ENCODE measurements at regions of chr12 and their contacts with region 1.

Region 1: DNA sequence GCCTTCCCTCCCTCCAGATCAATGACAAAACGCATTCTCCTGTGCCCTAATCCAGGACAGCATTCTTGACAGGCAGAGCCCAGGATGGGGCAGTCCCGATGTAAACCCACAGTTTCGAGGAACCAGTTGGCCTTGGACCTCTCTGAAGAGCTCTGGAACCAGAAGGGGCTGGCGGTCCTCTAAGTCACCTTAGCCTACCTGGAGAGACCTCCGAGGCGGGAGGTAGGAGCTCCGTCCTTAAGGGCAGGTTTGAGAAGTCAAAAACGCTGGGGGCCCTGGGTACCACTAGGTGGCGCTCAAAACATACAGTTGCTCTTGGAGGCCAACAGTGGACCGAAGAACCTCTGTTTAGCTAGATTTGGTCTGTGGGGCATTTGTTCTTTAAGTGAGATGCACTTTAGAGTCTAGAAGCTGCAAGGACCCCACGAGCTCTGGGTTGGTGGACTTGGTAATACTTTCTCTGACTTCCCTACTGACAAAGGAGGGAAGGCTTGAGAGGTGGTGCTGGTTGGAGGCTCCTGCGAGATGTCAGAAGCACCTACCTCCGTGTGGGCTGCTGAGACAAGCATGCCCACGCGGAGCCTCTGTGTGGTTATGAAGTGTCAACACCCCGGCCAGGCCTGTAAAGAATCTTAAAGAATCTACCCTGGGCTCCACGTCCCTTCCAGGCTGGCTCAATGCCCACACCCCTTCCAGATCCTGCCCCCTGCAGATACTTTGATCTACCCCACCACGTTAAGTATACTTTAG is 74.8 kb upstream of the CHST11 start:
- DNase-seq: peak; percentile 87
- H3K4me3 Mint-ChIP-seq: no peak overlapping the region
- H3K27ac Mint-ChIP-seq: no peak overlapping the region
- H3K4me1 Mint-ChIP-seq: peaks cover 10% of the 10 kb centered on the region
- H3K27me3 Mint-ChIP-seq: peaks cover 11% of the 10 kb centered on the region
- CTCF ChIP-seq: peak; percentile 92

Region 2: GRCh38 chr12:103868215-103868614 is 513.7 kb before region 1 on chr12:
- CTCF ChIA-PET with region 1: no interaction called
- POLR2A ChIA-PET with region 1: no interaction called
- intact Hi-C with region 1: no loop called
- DNase-seq: no peak
- H3K4me3 Mint-ChIP-seq: no peak overlapping the region
- H3K27ac Mint-ChIP-seq: no peak overlapping the region
- H3K4me1 Mint-ChIP-seq: no peaks in the 10 kb centered on the region
- H3K27me3 Mint-ChIP-seq: no peaks in the 10 kb centered on the region
- CTCF ChIP-seq: no peak

Region 3: GRCh38 chr12:104230304-104231095 is 151.4 kb before region 1 on chr12:
- CTCF ChIA-PET with region 1: no interaction called
- POLR2A ChIA-PET with region 1: no interaction called
- intact Hi-C with region 1: no loop called
- DNase-seq: no peak
- H3K4me3 Mint-ChIP-seq: no peak overlapping the region
- H3K27ac Mint-ChIP-seq: no peak overlapping the region
- H3K4me1 Mint-ChIP-seq: no peaks in the 10 kb centered on the region
- H3K27me3 Mint-ChIP-seq: no peaks in the 10 kb centered on the region
- CTCF ChIP-seq: no peak

Region 4: DNA sequence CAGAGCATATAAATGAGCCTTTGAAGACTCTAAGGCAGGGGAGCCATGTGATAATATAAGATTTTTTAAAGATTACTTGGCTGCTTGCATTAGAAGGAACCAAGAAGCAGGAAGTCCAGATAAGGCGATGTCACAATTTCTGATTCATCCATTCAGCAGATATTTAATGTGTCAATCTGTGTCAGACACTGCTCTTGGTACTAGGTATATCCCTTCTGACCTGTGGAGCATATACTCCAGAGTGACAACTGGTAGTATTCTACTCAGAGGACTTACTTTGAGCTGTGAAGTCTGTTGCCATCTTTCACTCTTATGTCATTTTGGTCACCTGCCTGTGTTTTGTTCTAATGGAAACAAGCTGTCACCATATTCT is 67.7 kb before region 1 on chr12:
- CTCF ChIA-PET with region 1: no interaction called
- POLR2A ChIA-PET with region 1: no interaction called
- intact Hi-C with region 1: no loop called
- DNase-seq: no peak
- H3K4me3 Mint-ChIP-seq: no peak overlapping the region
- H3K27ac Mint-ChIP-seq: no peak overlapping the region
- H3K4me1 Mint-ChIP-seq: peaks cover 7% of the 10 kb centered on the region
- H3K27me3 Mint-ChIP-seq: no peaks in the 10 kb centered on the region
- CTCF ChIP-seq: no peak

Region 5: DNA sequence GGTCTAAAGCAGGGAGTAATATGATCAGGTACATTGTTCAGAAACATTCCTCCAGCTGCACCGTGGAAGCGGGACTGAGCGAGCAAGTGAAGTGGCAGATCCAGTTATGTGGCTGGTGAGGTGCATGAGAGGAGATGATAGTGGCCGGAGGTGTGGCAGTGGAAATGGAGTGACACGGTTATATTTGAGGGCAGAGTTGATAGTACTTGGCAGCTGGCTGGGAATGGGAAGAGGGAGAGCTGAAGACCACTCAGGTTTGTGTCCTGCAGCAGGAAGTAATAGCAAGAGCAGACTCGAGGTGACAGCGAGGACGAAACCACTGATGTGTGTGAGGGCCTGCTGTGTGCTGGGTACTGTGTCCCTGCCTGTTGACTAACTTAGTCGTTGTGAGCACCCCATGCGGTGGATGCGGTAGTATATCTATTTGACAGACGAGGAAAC is 39.1 kb before region 1 on chr12:
- CTCF ChIA-PET with region 1: interaction called, 11 read pairs
- POLR2A ChIA-PET with region 1: no interaction called
- intact Hi-C with region 1: no loop called
- DNase-seq: no peak
- H3K4me3 Mint-ChIP-seq: no peak overlapping the region
- H3K27ac Mint-ChIP-seq: no peak overlapping the region
- H3K4me1 Mint-ChIP-seq: peaks cover 6% of the 10 kb centered on the region
- H3K27me3 Mint-ChIP-seq: no peaks in the 10 kb centered on the region
- CTCF ChIP-seq: no peak

Region 6: DNA sequence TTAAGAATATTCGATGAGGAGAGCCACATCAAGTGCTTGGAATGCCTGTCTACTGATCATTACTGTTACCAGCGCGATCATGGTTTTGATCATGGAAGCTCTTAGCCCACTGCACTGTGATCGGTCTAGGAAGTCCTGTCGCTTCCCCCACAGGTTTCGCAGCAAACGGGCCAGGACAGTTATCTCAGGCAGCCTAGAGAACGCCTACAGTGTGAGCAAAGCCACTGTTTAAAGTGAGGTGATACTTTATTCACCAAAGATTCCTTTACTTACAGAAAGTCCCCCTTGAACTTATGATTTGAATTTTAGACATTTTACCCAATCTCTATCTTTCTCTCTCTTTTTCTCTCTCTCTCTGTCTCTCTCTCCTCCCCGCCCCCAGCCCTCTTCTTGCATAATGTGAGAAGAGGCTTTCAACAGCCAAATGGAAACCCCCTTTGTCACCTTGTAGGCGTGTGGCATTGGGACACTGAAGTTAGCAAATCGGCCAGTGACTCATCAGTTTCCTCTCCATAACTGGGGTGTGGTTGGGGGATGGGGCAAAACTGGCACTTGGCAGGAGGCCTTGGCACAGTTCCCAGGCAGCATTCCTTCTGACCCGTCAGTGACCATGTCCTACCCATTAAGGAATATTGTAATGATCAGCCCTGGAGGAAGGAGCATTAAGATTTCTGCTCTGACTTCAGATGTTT is 289.6 kb after region 1 on chr12:
- CTCF ChIA-PET with region 1: interaction called, 3 read pairs
- POLR2A ChIA-PET with region 1: no interaction called
- intact Hi-C with region 1: loop called (anchors 2 kb)
- DNase-seq: peak; percentile 98
- H3K4me3 Mint-ChIP-seq: peak overlapping the region; percentile 30
- H3K27ac Mint-ChIP-seq: peak overlapping the region; percentile 90
- H3K4me1 Mint-ChIP-seq: peaks cover 49% of the 10 kb centered on the region
- H3K27me3 Mint-ChIP-seq: no peaks in the 10 kb centered on the region
- CTCF ChIP-seq: no peak

Region 7: DNA sequence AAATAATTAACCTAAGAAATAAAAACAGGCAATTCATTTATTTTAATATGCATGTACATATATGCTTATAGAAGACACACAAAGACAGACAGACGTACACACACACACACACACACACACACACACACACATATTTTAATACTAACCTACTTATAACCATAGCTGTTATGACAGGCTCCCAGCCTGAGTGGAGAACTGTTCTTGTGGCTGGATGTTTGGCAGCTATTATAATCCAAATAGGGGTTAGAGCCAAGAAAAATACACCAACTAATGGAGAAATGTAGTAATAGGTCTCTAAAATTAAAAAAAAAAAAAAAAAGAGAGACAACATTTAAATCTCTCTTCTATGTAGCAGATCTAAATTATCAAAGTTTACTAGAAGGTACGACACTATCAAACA is 484.4 kb after region 1 on chr12:
- CTCF ChIA-PET with region 1: interaction called, 10 read pairs
- POLR2A ChIA-PET with region 1: no interaction called
- intact Hi-C with region 1: no loop called
- DNase-seq: peak; percentile 72
- H3K4me3 Mint-ChIP-seq: no peak overlapping the region
- H3K27ac Mint-ChIP-seq: no peak overlapping the region
- H3K4me1 Mint-ChIP-seq: peaks cover 13% of the 10 kb centered on the region
- H3K27me3 Mint-ChIP-seq: no peaks in the 10 kb centered on the region
- CTCF ChIP-seq: no peak

Region 8: GRCh38 chr12:104958009-104958945 is 576.4 kb after region 1 on chr12 and contains the start of gene SLC41A2:
- CTCF ChIA-PET with region 1: interaction called, 11 read pairs
- POLR2A ChIA-PET with region 1: interaction called, 3 read pairs
- intact Hi-C with region 1: loop called (anchors 1 kb)
- DNase-seq: peak; percentile 95
- H3K4me3 Mint-ChIP-seq: peak within 1 kb of the TSS; percentile 91
- H3K27ac Mint-ChIP-seq: peak within 1 kb of the TSS; percentile 85
- H3K4me1 Mint-ChIP-seq: peaks cover 11% of the 10 kb centered on the region
- H3K27me3 Mint-ChIP-seq: no peaks in the 10 kb centered on the region
- CTCF ChIP-seq: peak; percentile 25
- total RNA-seq, gene SLC41A2: 14.6 and 15.9 TPM in 2 replicates

Region 9: GRCh38 chr12:105100998-105101397 is 719.1 kb after region 1 on chr12:
- CTCF ChIA-PET with region 1: interaction called, 5 read pairs
- POLR2A ChIA-PET with region 1: interaction called, 3 read pairs
- intact Hi-C with region 1: loop called (anchors 1 kb)
- DNase-seq: no peak
- H3K4me3 Mint-ChIP-seq: no peak overlapping the region
- H3K27ac Mint-ChIP-seq: peak overlapping the region; percentile 85
- H3K4me1 Mint-ChIP-seq: peaks cover 12% of the 10 kb centered on the region
- H3K27me3 Mint-ChIP-seq: no peaks in the 10 kb centered on the region
- CTCF ChIP-seq: peak; percentile 24